ENCODE measurements at regions of chr2 and their contacts with region 1.

Region 1: DNA sequence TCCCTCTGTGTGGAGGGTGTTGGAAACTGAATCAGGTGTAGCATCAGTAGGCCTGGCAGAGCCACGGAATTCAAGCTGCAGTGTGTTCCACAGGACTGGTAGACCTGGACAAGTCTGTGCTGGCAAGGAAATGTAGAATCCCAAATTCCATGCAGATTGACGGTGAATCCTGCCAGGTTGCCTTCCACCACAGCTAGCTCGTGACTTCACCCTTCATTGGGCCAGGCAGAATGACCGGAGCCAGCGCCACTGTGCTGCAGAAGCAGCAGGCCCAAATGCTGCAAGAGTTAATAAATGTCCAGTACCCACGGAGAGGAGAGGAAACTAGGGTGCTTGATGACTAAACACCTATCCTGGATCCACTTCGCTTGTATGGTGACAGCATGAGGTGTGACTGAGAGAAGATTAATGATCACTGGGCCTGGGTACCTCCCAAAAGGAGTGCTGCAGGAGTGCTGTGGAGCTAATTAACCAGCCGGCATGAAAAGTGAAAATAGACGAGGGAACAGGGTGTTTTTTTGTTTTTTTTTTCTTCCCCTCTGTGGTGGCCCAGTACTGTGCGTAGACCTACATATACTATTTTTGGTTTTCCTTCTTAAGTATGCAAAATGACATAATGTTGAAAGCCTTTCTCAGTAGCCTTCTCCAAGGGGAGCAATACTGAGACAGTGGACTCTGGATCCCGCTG is 122.2 kb downstream of the TANC1 start:
- DNase-seq: peak; percentile 64
- H3K4me3 Mint-ChIP-seq: peak overlapping the region; percentile 41
- H3K27ac Mint-ChIP-seq: peak overlapping the region; percentile 78
- H3K4me1 Mint-ChIP-seq: peaks cover 51% of the 10 kb centered on the region
- H3K27me3 Mint-ChIP-seq: no peaks in the 10 kb centered on the region
- CTCF ChIP-seq: no peak

Region 2: GRCh38 chr2:158979772-158980171 is 110.9 kb before region 1 on chr2:
- CTCF ChIA-PET with region 1: no interaction called
- POLR2A ChIA-PET with region 1: no interaction called
- intact Hi-C with region 1: no loop called
- DNase-seq: peak; percentile 33
- H3K4me3 Mint-ChIP-seq: no peak overlapping the region
- H3K27ac Mint-ChIP-seq: no peak overlapping the region
- H3K4me1 Mint-ChIP-seq: peaks cover 31% of the 10 kb centered on the region
- H3K27me3 Mint-ChIP-seq: no peaks in the 10 kb centered on the region
- CTCF ChIP-seq: no peak

Region 3: DNA sequence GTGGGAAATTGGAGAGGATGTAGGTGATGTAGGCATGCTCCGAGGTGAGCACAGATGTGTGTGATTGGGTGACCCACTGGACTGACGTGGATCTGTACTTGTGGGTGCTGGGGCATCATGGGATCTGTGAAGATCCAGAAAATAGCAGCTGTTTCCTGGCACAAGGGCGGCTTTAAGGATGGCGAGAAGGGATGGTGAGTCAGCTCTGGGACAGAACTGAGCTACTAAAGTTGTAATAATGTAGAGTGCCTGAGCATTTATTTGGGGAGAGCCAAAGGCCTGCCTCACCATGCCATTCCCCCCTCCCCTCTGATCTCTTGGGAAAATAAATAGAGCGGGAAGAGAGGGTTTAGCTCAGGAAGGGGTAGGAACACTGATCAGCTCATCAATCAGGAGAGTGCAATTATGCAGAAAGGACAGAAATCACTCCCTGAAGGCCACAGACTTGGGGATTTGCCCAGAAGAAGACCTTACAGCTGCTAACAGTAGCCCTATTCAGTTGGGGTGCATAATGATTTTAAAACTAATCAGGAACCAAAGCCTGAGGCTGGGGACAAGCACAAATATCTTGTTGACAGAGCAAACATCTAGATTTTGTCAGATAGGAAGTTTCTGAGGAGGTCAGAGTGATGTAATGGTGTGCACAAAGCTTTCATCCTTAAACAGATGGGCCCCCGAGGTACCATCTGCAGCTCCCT is 92.0 kb before region 1 on chr2:
- CTCF ChIA-PET with region 1: no interaction called
- POLR2A ChIA-PET with region 1: no interaction called
- intact Hi-C with region 1: no loop called
- DNase-seq: peak; percentile 70
- H3K4me3 Mint-ChIP-seq: peak overlapping the region; percentile 28
- H3K27ac Mint-ChIP-seq: peak overlapping the region; percentile 83
- H3K4me1 Mint-ChIP-seq: peaks cover 18% of the 10 kb centered on the region
- H3K27me3 Mint-ChIP-seq: no peaks in the 10 kb centered on the region
- CTCF ChIP-seq: no peak

Region 4: DNA sequence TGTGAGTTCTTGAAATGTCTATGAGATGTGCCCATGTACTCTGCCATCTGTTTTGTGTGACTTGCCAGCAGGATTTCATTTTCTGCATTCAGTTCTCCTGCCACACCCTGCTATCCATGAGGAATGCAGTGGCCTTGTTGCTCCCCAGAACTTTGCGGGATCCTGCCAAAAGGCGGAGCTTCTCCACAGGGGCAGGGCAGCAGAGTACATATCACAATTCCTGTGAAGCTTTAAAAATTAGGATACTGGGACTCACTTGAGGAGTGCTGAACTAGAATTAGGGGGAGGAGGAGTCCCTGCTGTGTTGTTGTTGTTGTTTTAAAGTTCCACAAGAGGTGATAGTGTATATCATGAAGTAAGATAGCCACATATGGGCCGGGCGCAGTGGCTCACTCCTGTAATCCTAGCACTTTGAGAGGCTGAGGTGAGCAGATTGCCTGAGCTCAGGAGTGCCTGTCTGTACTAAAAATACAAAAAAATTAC is 45.8 kb before region 1 on chr2:
- CTCF ChIA-PET with region 1: interaction called, 4 read pairs
- POLR2A ChIA-PET with region 1: interaction called, 24 read pairs
- intact Hi-C with region 1: no loop called
- DNase-seq: peak; percentile 72
- H3K4me3 Mint-ChIP-seq: peak overlapping the region; percentile 59
- H3K27ac Mint-ChIP-seq: peak overlapping the region; percentile 77
- H3K4me1 Mint-ChIP-seq: peaks cover 63% of the 10 kb centered on the region
- H3K27me3 Mint-ChIP-seq: no peaks in the 10 kb centered on the region
- CTCF ChIP-seq: no peak

Region 5: GRCh38 chr2:159076241-159076640 is 14.4 kb before region 1 on chr2:
- CTCF ChIA-PET with region 1: interaction called, 5 read pairs
- POLR2A ChIA-PET with region 1: interaction called, 35 read pairs
- intact Hi-C with region 1: no loop called
- DNase-seq: peak; percentile 64
- H3K4me3 Mint-ChIP-seq: peak overlapping the region; percentile 40
- H3K27ac Mint-ChIP-seq: peak overlapping the region; percentile 65
- H3K4me1 Mint-ChIP-seq: peaks cover 24% of the 10 kb centered on the region
- H3K27me3 Mint-ChIP-seq: no peaks in the 10 kb centered on the region
- CTCF ChIP-seq: no peak